ENCODE measurements at regions of chr14 and their contacts with region 1.

Region 1: DNA sequence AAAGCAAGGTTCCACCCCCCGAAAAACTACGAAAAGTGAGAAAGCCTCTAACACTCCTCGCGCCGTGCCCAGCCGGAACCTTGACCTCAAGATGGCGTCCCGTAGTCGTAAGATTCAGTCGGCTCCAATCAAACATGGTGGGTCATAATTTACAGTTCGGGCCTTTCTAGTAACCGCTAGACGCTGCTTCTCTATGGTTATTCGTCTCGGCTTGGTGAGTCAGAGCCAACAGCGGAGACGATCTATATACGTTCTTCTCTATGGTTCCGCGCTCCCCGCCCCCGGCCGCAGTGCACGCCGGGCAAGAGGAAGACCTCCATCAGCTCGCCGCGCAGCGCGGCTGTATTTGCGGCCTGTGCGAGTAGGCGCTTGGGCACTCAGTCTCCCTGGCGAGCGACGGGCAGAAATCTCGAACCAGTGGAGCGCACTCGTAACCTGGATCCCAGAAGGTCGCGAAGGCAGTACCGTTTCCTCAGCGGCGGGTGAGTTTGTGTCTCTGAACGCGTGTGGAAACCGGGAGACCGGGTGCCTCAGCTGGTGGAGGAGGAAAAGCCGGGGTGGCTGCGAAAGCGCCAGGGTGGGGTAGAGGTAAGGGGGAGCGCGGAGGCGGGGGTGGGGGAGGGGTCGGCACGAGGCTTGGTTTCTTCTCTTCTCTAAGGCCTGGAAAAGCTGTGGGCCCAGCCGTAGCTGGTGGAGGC is at the start of gene RBM25:
- DNase-seq: peak; percentile 96 to 99 (median 97)
- H3K4me3 ChIP-seq: peak within 1 kb of the TSS; percentile 67 to 93 (median 92)
- H3K4me3 Mint-ChIP-seq: no peak within 1 kb of the TSS
- H3K27ac ChIP-seq: peak within 1 kb of the TSS; percentile 88 to 99
- H3K27ac Mint-ChIP-seq: no peak within 1 kb of the TSS
- H3K4me1 ChIP-seq: peaks cover 15 to 23% of the 10 kb centered on the region in 2 donors
- H3K4me1 Mint-ChIP-seq: peaks cover 23% of the 10 kb centered on the region
- H3K27me3 ChIP-seq: no peaks in the 10 kb centered on the region
- H3K27me3 Mint-ChIP-seq: peaks cover 0 to 6% (median 2%) of the 10 kb centered on the region in 3 donors
- CTCF ChIP-seq: no peak
- polyA plus RNA-seq, gene RBM25: 15.6 to 46.5 (median 25.2) TPM

Region 2: GRCh38 chr14:72621387-72622065 is 436.8 kb before region 1 on chr14:
- intact Hi-C with region 1: no loop called
- DNase-seq: no peak
- H3K4me3 ChIP-seq: no peak overlapping the region
- H3K4me3 Mint-ChIP-seq: no peak overlapping the region
- H3K27ac ChIP-seq: no peak overlapping the region
- H3K27ac Mint-ChIP-seq: no peak overlapping the region
- H3K4me1 ChIP-seq: no peaks in the 10 kb centered on the region
- H3K4me1 Mint-ChIP-seq: no peaks in the 10 kb centered on the region
- H3K27me3 ChIP-seq: no peaks in the 10 kb centered on the region
- H3K27me3 Mint-ChIP-seq: peaks cover 1 to 10% (median 2%) of the 10 kb centered on the region in 3 donors
- CTCF ChIP-seq: no peak

Region 3: GRCh38 chr14:73026845-73027542 is 31.4 kb before region 1 on chr14 and contains the start of gene ZFYVE1:
- intact Hi-C with region 1: loop called in 1 of 2 experiments (anchors 2 kb)
- DNase-seq: peak; percentile 92 to 99 (median 95)
- H3K4me3 ChIP-seq: peak within 1 kb of the TSS; percentile 55 to 89 (median 88)
- H3K4me3 Mint-ChIP-seq: peak within 1 kb of the TSS; percentile 94 to 97
- H3K27ac ChIP-seq: peak within 1 kb of the TSS; percentile 56 to 79
- H3K27ac Mint-ChIP-seq: peak within 1 kb of the TSS; percentile 84 to 96 (median 93)
- H3K4me1 ChIP-seq: peaks cover 21 to 23% of the 10 kb centered on the region in 2 donors
- H3K4me1 Mint-ChIP-seq: peaks cover 39% of the 10 kb centered on the region
- H3K27me3 ChIP-seq: no peaks in the 10 kb centered on the region
- H3K27me3 Mint-ChIP-seq: peaks cover 0 to 1% (median 1%) of the 10 kb centered on the region in 3 donors
- CTCF ChIP-seq: no peak
- polyA plus RNA-seq, gene ZFYVE1: 4.9 to 18.6 (median 5.3) TPM

Region 4: DNA sequence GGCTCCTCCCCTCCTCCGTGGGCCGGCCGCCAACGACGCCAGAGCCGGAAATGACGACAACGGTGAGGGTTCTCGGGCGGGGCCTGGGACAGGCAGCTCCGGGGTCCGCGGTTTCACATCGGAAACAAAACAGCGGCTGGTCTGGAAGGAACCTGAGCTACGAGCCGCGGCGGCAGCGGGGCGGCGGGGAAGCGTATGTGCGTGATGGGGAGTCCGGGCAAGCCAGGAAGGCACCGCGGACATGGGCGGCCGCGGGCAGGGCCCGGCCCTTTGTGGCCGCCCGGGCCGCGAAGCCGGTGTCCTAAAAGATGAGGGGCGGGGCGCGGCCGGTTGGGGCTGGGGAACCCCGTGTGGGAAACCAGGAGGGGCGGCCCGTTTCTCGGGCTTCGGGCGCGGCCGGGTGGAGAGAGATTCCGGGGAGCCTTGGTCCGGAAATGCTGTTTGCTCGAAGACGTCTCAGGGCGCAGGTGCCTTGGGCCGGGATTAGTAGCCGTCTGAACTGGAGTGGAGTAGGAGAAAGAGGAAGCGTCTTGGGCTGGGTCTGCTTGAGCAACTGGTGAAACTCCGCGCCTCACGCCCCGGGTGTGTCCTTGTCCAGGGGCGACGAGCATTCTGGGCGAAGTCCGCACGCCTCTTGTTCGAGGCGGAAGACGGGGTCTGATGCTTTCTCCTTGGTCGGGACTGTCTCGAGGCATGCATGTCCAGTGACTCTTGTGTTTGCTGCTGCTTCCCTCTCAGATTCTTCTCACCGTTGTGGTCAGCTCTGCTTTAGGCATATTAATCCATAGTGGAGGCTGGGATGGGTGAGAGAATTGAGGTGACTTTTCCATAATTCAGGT is 78.2 kb after region 1 on chr14 and contains the start of gene PSEN1:
- intact Hi-C with region 1: loop called in 1 of 2 experiments (anchors 5 kb)
- DNase-seq: peak; percentile 96 to 99 (median 97)
- H3K4me3 ChIP-seq: peak within 1 kb of the TSS; percentile 47 to 79 (median 59)
- H3K4me3 Mint-ChIP-seq: peak within 1 kb of the TSS; percentile 80 to 95
- H3K27ac ChIP-seq: peak within 1 kb of the TSS; percentile 90 to 98
- H3K27ac Mint-ChIP-seq: peak within 1 kb of the TSS; percentile 94 to 99 (median 97)
- H3K4me1 ChIP-seq: peaks cover 16 to 21% of the 10 kb centered on the region in 2 donors
- H3K4me1 Mint-ChIP-seq: peaks cover 20% of the 10 kb centered on the region
- H3K27me3 ChIP-seq: no peaks in the 10 kb centered on the region
- H3K27me3 Mint-ChIP-seq: peaks cover 0 to 5% (median 0%) of the 10 kb centered on the region in 3 donors
- CTCF ChIP-seq: no peak
- polyA plus RNA-seq, gene PSEN1: 42.4 to 130 (median 85.6) TPM

Region 5: DNA sequence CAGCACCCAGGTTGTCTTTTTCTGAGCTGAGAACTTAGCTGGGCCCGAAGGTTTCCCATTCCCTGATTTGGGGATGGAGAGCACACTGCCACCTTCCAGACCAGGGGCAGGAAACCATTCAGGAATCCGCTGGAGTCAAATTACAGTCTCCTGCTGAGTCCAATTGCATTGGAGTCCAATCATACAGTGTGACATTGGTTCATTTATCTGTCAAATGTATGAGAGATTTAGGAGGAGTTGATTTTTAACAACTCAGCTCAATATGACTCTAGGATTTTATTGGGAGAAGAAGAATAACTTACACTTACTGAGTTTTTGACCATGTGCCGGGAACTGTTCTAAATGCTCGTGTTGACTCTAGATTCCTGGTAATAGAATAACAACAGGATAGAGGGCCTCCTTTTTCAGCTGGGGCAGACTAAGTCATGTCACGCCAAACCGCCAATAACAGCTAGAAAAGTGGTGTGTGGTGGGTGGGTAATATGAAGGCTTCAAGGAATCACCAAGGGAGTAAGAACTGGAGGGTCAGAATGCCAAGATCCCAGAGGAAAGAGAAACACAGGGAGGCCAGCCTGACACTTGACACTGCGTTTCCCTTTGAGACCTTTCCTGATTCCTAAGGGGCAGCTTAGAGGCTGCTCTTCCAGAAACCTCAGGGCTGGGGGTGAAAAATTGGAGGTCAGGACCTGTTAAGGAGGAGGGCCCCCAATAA is 1356.2 kb after region 1 on chr14:
- intact Hi-C with region 1: no loop called
- DNase-seq: no peak
- H3K4me3 ChIP-seq: no peak overlapping the region
- H3K4me3 Mint-ChIP-seq: no peak overlapping the region
- H3K27ac ChIP-seq: no peak overlapping the region
- H3K27ac Mint-ChIP-seq: peak overlapping the region in 1 of 7 donors; percentile 30
- H3K4me1 ChIP-seq: no peaks in the 10 kb centered on the region
- H3K4me1 Mint-ChIP-seq: no peaks in the 10 kb centered on the region
- H3K27me3 ChIP-seq: peaks cover 2 to 4% of the 10 kb centered on the region in 2 donors
- H3K27me3 Mint-ChIP-seq: peaks cover 9 to 22% (median 18%) of the 10 kb centered on the region in 3 donors
- CTCF ChIP-seq: no peak